ENCODE measurements at regions of chr21 and their contacts with region 1.

Region 1: GRCh38 chr21:31132574-31133242 is 94.4 kb upstream of the KRTAP19-8 start:
- DNase-seq: peak; percentile 80
- H3K4me3 Mint-ChIP-seq: peak overlapping the region; percentile 79
- H3K27ac Mint-ChIP-seq: peak overlapping the region; percentile 98
- H3K4me1 Mint-ChIP-seq: peaks cover 73% of the 10 kb centered on the region
- H3K27me3 Mint-ChIP-seq: no peaks in the 10 kb centered on the region

Region 2: DNA sequence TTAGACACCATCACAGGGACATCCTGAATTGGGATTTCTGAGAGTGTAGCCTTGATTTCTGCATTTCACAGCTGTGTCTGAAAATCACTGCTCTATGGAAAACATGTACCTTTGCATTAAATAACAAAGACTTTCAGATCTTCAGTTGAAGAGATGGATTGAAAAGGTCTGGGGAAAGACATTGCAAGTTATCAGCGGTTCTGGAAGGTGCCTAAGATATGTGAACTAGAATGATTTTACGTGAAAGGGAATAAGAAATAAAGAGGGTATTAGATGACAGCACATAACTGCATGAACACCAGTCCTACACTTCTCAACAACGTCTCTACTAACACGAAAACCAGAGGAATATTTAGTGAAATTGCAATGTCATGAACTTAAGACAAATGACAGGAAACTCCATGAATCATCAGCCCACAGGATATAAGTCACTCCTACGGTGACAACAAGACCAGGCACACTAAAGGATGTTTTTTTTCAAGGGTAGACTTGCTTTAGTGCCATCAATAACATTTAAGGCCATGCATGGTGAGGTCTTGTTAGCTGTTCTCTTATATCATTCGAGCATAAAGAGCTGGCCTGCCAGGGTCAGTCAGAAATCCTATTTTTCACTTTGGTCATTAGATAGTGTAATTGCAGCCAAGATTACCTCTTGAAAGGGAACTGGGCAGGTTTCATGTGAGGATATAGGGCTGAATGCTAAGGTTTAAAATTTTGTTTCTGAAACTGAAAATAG is 1476.0 kb before region 1 on chr21:
- intact Hi-C with region 1: loop called (anchors 10 kb)
- DNase-seq: peak; percentile 14
- H3K4me3 Mint-ChIP-seq: peak overlapping the region; percentile 45
- H3K27ac Mint-ChIP-seq: peak overlapping the region; percentile 82
- H3K4me1 Mint-ChIP-seq: peaks cover 39% of the 10 kb centered on the region
- H3K27me3 Mint-ChIP-seq: no peaks in the 10 kb centered on the region

Region 3: DNA sequence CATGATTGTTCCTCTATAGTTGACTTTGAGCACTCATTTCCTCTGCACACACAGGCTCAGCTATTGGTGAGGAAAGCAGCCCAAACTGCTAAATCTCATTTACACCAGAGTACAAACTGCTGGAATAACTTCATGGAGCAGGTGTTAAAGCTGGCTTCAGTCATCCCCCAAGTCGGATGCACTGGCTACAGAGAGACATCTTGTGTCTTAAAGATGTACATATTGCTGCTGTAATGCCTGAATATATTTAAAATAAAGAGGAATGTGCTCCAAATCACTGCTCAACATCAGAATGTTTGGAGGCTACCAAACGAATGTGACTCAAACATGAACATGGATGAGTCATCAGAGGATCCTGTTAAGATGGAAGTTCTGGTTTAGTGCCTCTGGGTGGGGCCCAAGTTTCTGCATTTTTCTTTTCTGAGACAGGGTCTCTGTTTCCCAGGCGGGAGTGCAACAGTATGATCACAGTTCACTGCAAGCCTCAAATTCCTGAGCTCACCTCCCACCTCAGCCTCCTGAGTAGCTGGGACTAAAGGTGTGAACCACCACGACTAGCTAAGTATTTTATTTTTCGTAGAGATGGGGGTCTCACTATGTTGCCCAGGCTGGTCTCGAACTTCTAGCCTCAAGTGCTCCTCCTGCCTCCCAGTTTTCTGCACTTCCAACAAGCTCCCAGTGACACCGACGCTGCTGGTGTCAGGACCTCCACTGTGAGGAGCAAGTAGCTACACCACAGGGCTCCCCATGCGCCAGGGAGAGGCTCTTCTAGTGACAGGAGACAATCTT is 15.4 kb before region 1 on chr21:
- intact Hi-C with region 1: loop called (anchors 1 kb)
- DNase-seq: no peak
- H3K4me3 Mint-ChIP-seq: no peak overlapping the region
- H3K27ac Mint-ChIP-seq: peak overlapping the region; percentile 67
- H3K4me1 Mint-ChIP-seq: peaks cover 38% of the 10 kb centered on the region
- H3K27me3 Mint-ChIP-seq: no peaks in the 10 kb centered on the region

Region 4: GRCh38 chr21:31198575-31198974 is 65.9 kb after region 1 on chr21:
- intact Hi-C with region 1: loop called (anchors 1 kb)
- DNase-seq: no peak
- H3K4me3 Mint-ChIP-seq: no peak overlapping the region
- H3K27ac Mint-ChIP-seq: no peak overlapping the region
- H3K4me1 Mint-ChIP-seq: peaks cover 46% of the 10 kb centered on the region
- H3K27me3 Mint-ChIP-seq: no peaks in the 10 kb centered on the region

Region 5: DNA sequence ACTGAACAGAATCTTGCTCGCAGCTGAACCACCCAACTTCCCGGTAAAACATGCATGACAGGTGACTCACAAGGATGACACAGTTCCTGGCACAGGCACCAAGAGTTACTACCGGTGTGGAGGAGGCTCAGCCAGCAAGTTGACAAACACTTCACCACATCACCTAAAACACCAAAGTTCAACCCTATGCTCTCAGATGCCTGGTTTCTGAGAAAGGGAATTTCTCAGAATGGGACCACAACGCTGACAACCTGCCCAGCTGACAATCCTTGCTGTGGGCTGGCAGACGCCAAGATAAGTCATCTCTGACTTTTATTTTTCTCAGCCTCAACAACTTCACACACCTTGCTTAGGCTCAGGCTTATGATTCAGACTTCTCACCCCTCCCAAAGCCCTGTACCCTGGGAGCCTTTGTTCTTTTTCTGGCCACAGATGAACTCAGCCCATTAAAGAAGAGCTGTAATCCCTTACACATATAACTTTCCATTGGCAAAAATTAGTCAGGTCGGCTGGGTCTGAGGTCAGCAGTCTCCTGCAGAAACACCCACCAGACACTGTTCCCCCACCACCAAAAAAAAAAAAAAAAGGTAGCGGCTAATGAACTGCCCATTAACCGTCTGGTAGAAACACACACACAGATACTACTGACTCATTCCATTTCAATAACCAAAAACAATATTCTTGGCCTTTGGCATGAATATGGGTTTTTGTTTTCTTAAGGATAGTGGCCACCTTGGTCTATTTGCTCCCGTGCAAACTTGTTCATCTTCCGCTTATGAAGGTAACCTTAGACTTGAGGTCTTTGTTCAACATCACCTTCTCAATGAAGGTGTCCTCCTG is 222.1 kb after region 1 on chr21:
- intact Hi-C with region 1: loop called (anchors 1 kb)
- DNase-seq: peak; percentile 85
- H3K4me3 Mint-ChIP-seq: peak overlapping the region; percentile 38
- H3K27ac Mint-ChIP-seq: peak overlapping the region; percentile 77
- H3K4me1 Mint-ChIP-seq: peaks cover 14% of the 10 kb centered on the region
- H3K27me3 Mint-ChIP-seq: peaks cover 2% of the 10 kb centered on the region

Region 6: GRCh38 chr21:31659536-31660258 is 527.0 kb after region 1 on chr21 and contains the start of gene SOD1:
- intact Hi-C with region 1: loop called (anchors 1 kb)
- DNase-seq: peak; percentile 96
- H3K4me3 Mint-ChIP-seq: peak within 1 kb of the TSS; percentile 99
- H3K27ac Mint-ChIP-seq: peak within 1 kb of the TSS; percentile 100
- H3K4me1 Mint-ChIP-seq: peaks cover 76% of the 10 kb centered on the region
- H3K27me3 Mint-ChIP-seq: no peaks in the 10 kb centered on the region
- total RNA-seq, gene SOD1: 346 and 354 TPM in 2 replicates

Measured in activated T-helper 1 cell treated with anti-CD3 and anti-CD28 coated beads, Interleukin-12 subunit alpha, Interleukin-12 subunit beta, Interleukin-2, Interleukin-4 antibody, amounts not matched to agents 30 ng/mL and 10 ng/mL and 1 ng/mL, durations not matched to agents 14 hours and 24 hours and 36 hours (primary cell).